ENCODE measurements at regions of chr20 and their contacts with region 1.

Region 1: DNA sequence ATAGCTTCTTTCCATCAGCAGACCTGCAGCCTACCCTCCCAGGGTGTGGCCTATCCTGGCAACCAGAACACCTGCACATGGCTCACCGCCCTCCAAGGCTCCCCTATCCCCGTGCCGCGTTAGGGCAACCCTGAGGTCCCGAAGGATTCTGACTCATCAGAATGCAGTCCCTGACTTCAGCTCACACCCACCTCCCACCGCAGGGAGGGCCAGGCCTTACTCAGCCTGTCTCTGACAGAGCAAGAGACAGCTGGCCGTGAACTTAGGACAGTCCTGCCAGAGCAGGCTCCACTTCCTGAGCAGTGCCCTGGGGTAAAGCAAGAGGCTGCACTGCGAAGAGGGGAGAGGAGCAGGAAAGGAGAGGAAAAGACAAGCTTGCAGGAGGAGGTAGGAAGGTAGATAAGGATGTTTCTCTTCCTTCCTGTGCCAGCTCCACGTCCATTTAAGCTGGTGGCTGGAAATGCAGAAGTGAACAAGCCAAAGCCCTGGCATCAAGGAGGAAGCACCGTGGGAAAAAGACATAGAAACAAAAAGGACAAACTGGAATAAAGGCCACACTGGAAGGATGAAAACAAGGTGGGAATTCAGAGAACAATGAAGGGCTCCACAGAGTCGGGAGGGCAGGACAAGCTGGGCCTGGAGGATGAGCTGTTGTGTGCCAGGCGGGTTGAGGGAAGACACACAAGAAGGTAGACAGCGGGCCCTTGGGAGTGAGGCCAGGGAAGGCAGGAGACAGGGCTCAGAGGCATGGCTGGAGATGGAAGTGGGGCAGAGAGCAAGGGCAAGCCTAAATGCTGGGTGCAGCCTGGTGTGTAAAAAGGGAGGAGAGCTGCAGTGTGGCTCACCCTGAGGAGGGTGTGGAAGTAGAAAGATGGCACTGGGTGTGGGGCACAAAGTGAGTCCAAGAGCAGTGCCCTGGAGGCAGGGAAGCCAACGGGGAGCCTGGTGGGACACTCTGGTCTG is 102.7 kb downstream of the SLC23A2 start:
- DNase-seq: no peak
- ATAC-seq: no peak
- H3K4me3 Mint-ChIP-seq: no peak overlapping the region
- H3K27ac Mint-ChIP-seq: no peak overlapping the region
- H3K4me1 Mint-ChIP-seq: peaks cover 31% of the 10 kb centered on the region
- H3K27me3 Mint-ChIP-seq: no peaks in the 10 kb centered on the region
- CTCF ChIP-seq: no peak

Region 2: DNA sequence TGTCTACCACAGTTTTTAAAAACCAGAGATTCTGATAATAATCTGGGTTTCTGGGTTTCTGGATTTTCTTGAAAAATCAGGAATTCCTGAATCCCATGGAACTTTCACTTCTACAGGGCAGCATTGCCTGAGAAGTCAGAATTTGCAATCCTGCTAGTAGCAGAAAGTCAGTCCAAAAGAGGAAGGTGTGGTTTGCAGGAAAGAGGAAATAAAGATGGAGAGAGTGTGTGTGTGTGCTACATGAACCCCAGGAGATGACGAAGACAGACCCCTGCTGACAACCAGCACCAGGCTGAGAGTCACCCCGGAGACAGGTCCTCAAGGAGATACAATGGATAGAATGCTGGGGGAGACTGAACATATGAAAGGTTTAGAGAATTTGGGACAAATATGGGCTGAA is 131.9 kb before region 1 on chr20:
- CTCF ChIA-PET with region 1: no interaction called
- POLR2A ChIA-PET with region 1: no interaction called
- intact Hi-C with region 1: no loop called
- DNase-seq: no peak
- ATAC-seq: peak; percentile 90
- H3K4me3 Mint-ChIP-seq: peak overlapping the region; percentile 42
- H3K27ac Mint-ChIP-seq: peak overlapping the region; percentile 83
- H3K4me1 Mint-ChIP-seq: peaks cover 26% of the 10 kb centered on the region
- H3K27me3 Mint-ChIP-seq: no peaks in the 10 kb centered on the region
- CTCF ChIP-seq: no peak

Region 3: GRCh38 chr20:4795394-4795793 is 103.2 kb before region 1 on chr20:
- CTCF ChIA-PET with region 1: no interaction called
- POLR2A ChIA-PET with region 1: no interaction called
- intact Hi-C with region 1: no loop called
- DNase-seq: no peak
- ATAC-seq: peak; percentile 74
- H3K4me3 Mint-ChIP-seq: no peak overlapping the region
- H3K27ac Mint-ChIP-seq: peak overlapping the region; percentile 61
- H3K4me1 Mint-ChIP-seq: peaks cover 7% of the 10 kb centered on the region
- H3K27me3 Mint-ChIP-seq: no peaks in the 10 kb centered on the region
- CTCF ChIP-seq: no peak

Region 4: GRCh38 chr20:4937397-4938319 is 39.1 kb after region 1 on chr20:
- CTCF ChIA-PET with region 1: no interaction called
- POLR2A ChIA-PET with region 1: no interaction called
- intact Hi-C with region 1: loop called (anchors 5 kb)
- DNase-seq: no peak
- ATAC-seq: no peak
- H3K4me3 Mint-ChIP-seq: no peak overlapping the region
- H3K27ac Mint-ChIP-seq: no peak overlapping the region
- H3K4me1 Mint-ChIP-seq: peaks cover 42% of the 10 kb centered on the region
- H3K27me3 Mint-ChIP-seq: no peaks in the 10 kb centered on the region
- CTCF ChIP-seq: no peak

Region 5: DNA sequence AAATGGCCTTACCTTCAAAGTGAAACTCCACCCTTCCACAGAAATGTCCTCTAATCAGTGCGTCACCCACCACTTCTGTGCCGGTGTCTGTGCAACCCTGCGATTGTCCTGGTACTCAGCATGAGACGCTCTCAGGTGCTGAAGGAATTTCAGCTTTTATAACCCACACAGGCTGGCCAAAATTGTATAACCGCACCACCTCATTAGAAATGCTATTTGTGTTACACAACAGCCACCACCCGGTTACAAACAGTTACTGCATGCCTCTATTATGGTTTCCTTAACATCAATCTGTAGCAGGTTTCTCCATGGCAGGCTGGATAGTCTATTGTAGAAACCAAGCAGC is 51.2 kb after region 1 on chr20:
- CTCF ChIA-PET with region 1: no interaction called
- POLR2A ChIA-PET with region 1: no interaction called
- intact Hi-C with region 1: loop called (anchors 5 kb)
- DNase-seq: no peak
- ATAC-seq: peak; percentile 53
- H3K4me3 Mint-ChIP-seq: peak overlapping the region; percentile 76
- H3K27ac Mint-ChIP-seq: peak overlapping the region; percentile 70
- H3K4me1 Mint-ChIP-seq: peaks cover 63% of the 10 kb centered on the region
- H3K27me3 Mint-ChIP-seq: no peaks in the 10 kb centered on the region
- CTCF ChIP-seq: no peak